Posterior cingulate gyrus (tissue), 11 donors: ENCODE measurements at regions of chr12 and their contacts with region 1.

Region 1: DNA sequence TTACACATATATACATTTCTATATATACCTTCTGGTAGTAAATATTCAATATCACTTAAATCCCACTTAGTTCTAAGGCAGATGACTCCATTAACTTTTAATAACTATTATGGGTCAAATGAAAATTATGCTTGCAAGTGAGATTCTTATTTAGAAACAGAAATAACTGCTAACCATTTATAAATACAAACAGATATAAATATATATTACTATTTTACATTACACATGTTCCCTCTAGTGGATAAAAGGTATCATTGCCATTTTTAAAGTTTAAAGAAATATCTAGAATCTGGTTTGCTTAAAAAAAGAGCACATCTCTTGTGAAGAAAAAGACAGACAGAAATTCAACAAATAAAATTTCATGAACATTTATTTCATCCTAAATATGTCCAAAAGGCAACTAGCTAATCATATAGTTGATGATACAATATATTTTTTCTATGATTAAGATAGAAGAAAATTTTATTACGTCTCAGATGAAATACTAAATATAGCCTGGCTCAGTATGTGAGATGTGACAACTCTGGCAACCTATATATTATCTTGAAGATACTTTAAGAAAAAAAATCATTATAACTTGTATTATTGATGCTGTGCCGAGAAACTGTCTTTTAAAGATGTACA is 11.7 kb upstream of the RAD51AP1 start:
- DNase-seq: no peak

Region 2: DNA sequence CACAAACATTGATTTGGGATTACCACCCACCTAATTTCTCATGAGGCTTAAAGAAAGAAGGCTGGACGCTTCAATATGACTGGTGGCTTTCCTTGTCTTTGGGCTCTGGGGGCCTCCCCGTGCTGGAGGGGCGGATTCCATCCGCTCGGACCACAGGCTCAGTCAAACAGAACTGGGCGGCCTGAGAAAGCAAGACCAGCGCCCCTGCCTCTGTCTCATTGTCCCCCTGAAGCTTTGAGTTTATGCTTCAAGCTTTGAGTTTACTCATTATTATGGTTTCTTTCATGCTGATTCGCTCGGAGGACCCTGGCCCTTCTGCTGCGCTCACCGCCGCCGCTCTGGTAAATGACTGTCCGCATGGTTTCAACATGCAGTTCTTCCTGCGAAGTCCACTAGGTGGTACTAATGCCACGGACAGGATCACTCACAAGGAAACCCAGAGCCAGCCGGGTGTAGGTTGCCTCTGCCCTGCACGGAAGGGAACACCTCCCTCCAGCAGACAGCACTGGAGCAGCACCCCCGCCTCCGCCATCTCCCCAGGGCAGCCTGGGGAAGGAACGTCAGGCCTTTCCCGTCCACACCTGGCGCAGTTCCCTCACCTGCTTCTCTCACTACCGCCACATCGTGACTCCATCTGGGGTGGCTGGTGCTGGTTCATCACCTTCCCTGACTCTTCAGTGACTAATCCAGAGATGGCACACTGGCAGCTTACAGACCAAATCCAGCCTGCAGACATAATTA is 219.3 kb before region 1 on chr12:
- intact Hi-C with region 1: loop called (anchors 5 kb)
- DNase-seq: peak; percentile 43 to 96 (median 72)

Region 3: GRCh38 chr12:4353785-4354208 is 173.2 kb before region 1 on chr12:
- intact Hi-C with region 1: loop called (anchors 5 kb)
- DNase-seq: no peak

Region 4: DNA sequence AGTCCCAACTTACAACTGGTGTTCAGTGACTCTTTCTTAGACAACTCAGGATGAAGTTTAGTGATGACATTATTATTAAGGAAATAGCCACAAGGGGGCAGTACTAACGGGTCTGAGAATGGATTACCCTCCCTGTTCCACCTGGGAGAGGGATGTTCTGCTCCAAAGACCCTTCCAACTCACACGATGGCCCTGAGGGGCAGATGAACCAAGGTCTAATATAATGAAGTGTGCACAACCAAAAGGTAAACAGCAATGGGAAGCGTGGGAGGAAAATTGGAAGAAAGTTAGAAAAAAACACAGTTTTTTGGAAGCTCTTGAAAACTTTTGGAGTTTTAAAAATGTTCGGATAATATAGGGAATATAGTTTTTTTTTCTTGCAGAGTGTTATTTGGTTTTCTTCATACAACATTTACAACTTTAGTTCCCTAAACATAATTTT is 105.4 kb before region 1 on chr12:
- intact Hi-C with region 1: loop called (anchors 10 kb)
- DNase-seq: no peak